Calu3 (cell line): ENCODE measurements at regions of chr2 and their contacts with region 1.

Region 1: GRCh38 chr2:232449964-232450363 is 6.0 kb upstream of the ALPI start:
- DNase-seq: no peak
- H3K4me3 Mint-ChIP-seq: no peak overlapping the region
- H3K27ac Mint-ChIP-seq: no peak overlapping the region
- H3K4me1 Mint-ChIP-seq: no peaks in the 10 kb centered on the region
- H3K27me3 Mint-ChIP-seq: peaks cover 48% of the 10 kb centered on the region
- CTCF ChIP-seq: no peak

Region 2: DNA sequence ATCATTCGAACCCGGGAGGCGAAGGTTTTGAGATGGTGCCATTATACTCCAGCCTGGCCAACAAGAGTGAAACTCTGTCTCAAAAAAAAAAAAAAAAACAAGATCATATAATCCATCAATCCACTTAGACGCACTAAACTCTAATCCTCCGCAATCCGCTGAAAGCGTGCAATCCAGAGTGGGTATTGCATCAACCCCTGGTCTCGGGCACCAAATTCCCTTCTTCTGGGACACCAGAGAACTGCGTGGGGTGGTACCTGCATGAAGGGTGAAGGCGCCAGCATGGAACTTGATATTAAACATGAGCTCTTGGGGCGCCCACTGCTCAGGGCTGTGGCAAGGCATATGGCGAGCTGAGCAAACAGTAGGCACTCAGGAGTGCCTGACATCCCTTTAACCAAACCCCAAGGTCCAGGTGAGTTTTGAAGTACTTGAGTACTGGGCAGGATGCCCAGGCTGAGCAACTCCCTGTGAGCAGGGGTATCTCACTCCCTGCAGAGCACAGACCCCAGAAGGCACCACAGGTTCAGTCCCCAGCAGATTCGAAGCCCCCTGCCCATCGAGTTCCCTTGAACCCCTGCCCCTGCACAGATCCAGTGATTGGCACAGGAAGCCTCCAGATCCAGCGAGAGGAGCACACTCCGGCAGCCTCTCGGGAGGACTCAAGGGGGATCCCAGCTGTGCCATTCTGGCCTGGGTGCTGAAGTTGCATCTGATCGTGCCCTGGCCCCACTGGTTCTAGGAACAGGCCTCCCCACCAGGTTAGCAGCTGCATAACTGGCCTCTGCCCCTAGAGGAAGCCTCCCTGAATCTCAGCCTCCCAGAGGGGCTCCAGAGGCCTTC is 14.0 kb after region 1 on chr2:
- CTCF ChIA-PET with region 1: no interaction called
- intact Hi-C with region 1: no loop called
- DNase-seq: no peak
- H3K4me3 Mint-ChIP-seq: no peak overlapping the region
- H3K27ac Mint-ChIP-seq: no peak overlapping the region
- H3K4me1 Mint-ChIP-seq: no peaks in the 10 kb centered on the region
- H3K27me3 Mint-ChIP-seq: peaks cover 78% of the 10 kb centered on the region
- CTCF ChIP-seq: no peak

Region 3: DNA sequence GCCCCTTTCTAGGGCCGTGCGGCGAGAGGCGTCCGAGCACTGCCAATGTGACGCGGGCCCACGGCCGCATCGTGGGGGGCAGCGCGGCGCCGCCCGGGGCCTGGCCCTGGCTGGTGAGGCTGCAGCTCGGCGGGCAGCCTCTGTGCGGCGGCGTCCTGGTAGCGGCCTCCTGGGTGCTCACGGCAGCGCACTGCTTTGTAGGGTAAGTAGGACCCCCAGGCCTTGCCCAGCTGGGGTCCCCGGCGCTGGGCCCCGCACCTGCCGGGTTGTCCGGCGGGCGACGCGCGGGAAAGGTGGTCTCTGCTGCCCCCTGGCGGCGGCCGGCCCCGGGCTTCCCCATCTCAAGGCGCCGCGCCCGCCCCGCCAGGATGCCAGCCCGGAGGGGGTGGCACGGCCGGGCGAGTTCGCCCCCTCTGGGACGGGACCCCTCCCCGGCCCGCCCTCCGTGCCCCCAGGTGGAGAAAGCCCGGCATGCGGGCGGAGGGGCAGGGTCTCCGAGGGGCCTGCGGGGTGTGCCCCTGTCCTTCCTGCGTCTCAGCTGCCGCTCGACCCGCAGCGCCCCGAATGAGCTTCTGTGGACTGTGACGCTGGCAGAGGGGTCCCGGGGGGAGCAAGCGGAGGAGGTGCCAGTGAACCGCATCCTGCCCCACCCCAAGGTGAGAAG is 72.1 kb after region 1 on chr2:
- CTCF ChIA-PET with region 1: interaction called, 9 read pairs
- intact Hi-C with region 1: loop called (anchors 5 kb)
- DNase-seq: peak; percentile 80
- H3K4me3 Mint-ChIP-seq: no peak overlapping the region
- H3K27ac Mint-ChIP-seq: no peak overlapping the region
- H3K4me1 Mint-ChIP-seq: no peaks in the 10 kb centered on the region
- H3K27me3 Mint-ChIP-seq: peaks cover 91% of the 10 kb centered on the region
- CTCF ChIP-seq: peak; percentile 88

Region 4: GRCh38 chr2:232647261-232647660 is 197.3 kb after region 1 on chr2:
- CTCF ChIA-PET with region 1: no interaction called
- intact Hi-C with region 1: no loop called
- DNase-seq: no peak
- H3K4me3 Mint-ChIP-seq: no peak overlapping the region
- H3K27ac Mint-ChIP-seq: no peak overlapping the region
- H3K4me1 Mint-ChIP-seq: no peaks in the 10 kb centered on the region
- H3K27me3 Mint-ChIP-seq: peaks cover 21% of the 10 kb centered on the region
- CTCF ChIP-seq: no peak